CD4-positive, alpha-beta T cell (primary cell): ENCODE measurements at regions of chr12 and their contacts with region 1.

Region 1: GRCh38 chr12:41277116-41277945 is 89.2 kb downstream of the PDZRN4 start:
- DNase-seq: peak in 4 of 14 experiments; percentile 4 to 39 (median 24)
- ATAC-seq: peak; percentile 29
- H3K4me3 ChIP-seq: no peak overlapping the region
- H3K4me3 Mint-ChIP-seq: no peak overlapping the region
- H3K27ac ChIP-seq: no peak overlapping the region
- H3K27ac Mint-ChIP-seq: no peak overlapping the region
- H3K4me1 ChIP-seq: no peaks in the 10 kb centered on the region
- H3K4me1 Mint-ChIP-seq: no peaks in the 10 kb centered on the region
- H3K27me3 ChIP-seq: peaks cover 0 to 6% of the 10 kb centered on the region in 2 experiments
- H3K27me3 Mint-ChIP-seq: no peaks in the 10 kb centered on the region
- CTCF ChIP-seq: peak; percentile 33

Region 2: DNA sequence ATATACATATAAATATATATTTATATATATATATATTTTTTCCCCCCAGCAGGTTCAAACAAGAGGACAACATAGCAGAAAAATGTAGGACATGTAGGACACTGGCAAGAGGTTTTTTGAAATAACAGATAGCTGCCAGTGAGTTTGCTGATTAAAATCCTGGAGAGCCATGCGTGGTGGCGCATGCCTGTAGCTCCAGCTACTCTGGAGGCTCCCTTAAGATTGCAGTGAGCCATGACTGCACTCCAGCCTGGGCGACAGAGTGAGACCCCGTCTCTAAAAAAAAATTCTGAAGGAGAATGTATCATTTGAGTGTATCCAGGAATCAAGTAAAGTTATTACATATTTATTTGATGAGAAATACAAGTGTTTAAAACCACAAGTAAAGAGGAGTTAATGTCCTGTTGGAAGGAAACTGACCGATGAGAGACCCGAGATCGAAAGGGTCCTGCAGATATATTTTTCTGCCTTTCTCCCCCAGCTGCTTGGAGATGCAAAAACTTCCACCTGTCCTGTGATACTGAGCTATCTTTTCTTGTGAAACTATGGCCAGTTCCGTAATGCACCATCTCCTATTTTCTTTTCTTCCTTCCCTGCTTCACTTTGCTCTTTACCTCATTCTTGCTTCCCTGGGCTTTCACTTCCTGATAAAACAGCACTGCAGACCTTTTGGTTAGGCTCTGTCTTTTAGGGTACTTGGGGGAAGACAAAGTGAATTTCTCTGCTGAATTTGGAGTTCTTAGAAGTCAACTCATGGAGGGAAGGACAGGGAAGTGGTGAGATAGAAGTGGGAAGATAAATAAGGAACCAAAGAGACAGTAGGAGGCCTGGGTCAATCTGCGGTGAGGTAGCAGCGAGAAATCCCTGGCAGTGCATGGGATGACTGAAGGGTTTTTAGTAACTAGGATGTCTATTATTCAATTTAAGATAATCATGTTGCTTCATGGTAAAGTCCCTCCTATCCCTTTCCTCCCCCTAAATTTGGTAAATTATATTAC is 1130.2 kb before region 1 on chr12:
- CTCF ChIA-PET with region 1: no interaction called
- POLR2A ChIA-PET with region 1: no interaction called
- intact Hi-C with region 1: no loop called
- DNase-seq: peak in 1 of 14 experiments; percentile 32
- ATAC-seq: peak; percentile 41
- H3K4me3 ChIP-seq: no peak overlapping the region
- H3K4me3 Mint-ChIP-seq: no peak overlapping the region
- H3K27ac ChIP-seq: no peak overlapping the region
- H3K27ac Mint-ChIP-seq: no peak overlapping the region
- H3K4me1 ChIP-seq: no peaks in the 10 kb centered on the region
- H3K4me1 Mint-ChIP-seq: no peaks in the 10 kb centered on the region
- H3K27me3 ChIP-seq: no peaks in the 10 kb centered on the region
- H3K27me3 Mint-ChIP-seq: peaks cover 5% of the 10 kb centered on the region
- CTCF ChIP-seq: no peak

Region 3: DNA sequence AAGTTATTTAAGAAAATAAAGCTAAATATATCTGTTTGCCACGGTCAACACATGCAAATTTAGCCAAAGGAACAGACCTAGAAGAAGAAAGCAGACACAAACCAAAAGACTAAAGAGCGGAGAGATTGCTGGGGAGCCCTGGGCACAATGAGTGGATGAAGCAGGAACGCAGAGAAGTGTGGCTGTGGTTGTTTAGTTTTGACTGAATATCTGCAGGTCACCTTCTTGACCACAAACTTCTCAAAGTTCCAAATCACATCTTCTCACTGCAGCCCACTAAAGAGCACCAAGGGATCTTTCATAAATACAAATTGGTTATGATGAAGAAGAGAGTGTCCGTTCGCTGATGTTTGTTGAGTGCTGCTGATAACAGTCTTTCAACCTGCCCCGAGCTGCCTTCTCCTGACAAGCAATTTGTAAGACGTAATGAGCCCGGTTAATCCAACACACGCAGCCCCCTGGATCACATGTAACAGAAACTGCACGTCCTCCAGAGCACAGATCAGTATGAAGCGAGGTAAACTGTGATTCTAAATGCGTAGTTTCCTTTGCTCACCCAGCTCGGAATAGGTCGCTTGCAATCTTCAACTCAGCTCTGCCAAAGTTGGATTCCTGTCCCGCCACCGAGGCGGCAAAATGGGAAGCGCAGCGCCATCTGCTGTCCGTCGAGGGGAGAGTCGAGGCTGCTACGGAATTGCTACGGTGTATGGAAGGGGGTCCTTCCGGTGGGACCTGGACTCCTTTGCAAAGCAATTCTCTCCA is 746.6 kb after region 1 on chr12:
- CTCF ChIA-PET with region 1: interaction called, 3 read pairs
- POLR2A ChIA-PET with region 1: no interaction called
- intact Hi-C with region 1: loop called (anchors 5 kb)
- DNase-seq: peak; percentile 48 to 78 (median 59)
- ATAC-seq: peak; percentile 83
- H3K4me3 ChIP-seq: peak overlapping the region; percentile 36
- H3K4me3 Mint-ChIP-seq: peak overlapping the region; percentile 73
- H3K27ac ChIP-seq: no peak overlapping the region
- H3K27ac Mint-ChIP-seq: no peak overlapping the region
- H3K4me1 ChIP-seq: peaks cover 8% of the 10 kb centered on the region
- H3K4me1 Mint-ChIP-seq: peaks cover 9% of the 10 kb centered on the region
- H3K27me3 ChIP-seq: peaks cover 3 to 8% of the 10 kb centered on the region in 2 experiments
- H3K27me3 Mint-ChIP-seq: peaks cover 25% of the 10 kb centered on the region
- CTCF ChIP-seq: peak; percentile 90

Region 4: GRCh38 chr12:42104087-42104486 is 826.8 kb after region 1 on chr12:
- CTCF ChIA-PET with region 1: no interaction called
- POLR2A ChIA-PET with region 1: no interaction called
- intact Hi-C with region 1: loop called in 1 of 2 experiments (anchors 5 kb)
- DNase-seq: no peak
- ATAC-seq: peak; percentile 46
- H3K4me3 ChIP-seq: no peak overlapping the region
- H3K4me3 Mint-ChIP-seq: no peak overlapping the region
- H3K27ac ChIP-seq: no peak overlapping the region
- H3K27ac Mint-ChIP-seq: peak overlapping the region; percentile 66
- H3K4me1 ChIP-seq: no peaks in the 10 kb centered on the region
- H3K4me1 Mint-ChIP-seq: peaks cover 21% of the 10 kb centered on the region
- H3K27me3 ChIP-seq: no peaks in the 10 kb centered on the region
- H3K27me3 Mint-ChIP-seq: no peaks in the 10 kb centered on the region
- CTCF ChIP-seq: peak; percentile 47

Region 5: DNA sequence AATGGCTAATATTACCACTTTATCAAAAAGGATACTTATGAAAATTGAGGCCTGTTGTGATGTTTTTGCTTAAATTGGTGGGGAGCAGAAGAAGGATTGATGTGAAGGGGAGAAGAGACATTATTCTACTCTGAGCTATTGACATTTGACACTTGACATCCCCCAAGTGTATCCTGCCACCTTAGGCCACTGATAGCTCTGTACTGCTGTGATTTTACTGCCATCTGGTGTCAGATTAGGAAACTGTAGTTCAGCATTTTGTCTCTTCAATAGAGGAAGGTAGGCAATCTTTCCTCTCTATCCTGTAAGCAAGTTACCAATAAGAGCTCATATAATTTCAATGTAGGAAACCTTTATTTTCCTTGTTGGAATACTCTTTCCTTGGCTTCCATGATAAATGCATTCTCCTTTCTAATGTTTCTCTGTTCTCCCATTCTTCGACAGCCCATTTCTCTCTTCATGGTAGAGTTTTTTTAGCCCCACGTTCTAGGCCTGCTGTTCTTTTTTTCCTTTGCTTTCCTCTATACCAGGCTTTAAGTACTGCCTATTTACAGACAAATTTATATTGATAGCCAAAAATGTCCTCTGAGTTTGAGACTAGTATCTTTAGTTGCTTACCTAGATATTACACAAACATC is 1094.9 kb after region 1 on chr12:
- CTCF ChIA-PET with region 1: no interaction called
- POLR2A ChIA-PET with region 1: no interaction called
- intact Hi-C with region 1: loop called (anchors 1 to 2 kb)
- DNase-seq: peak in 5 of 14 experiments; percentile 3 to 74 (median 63)
- ATAC-seq: peak; percentile 95
- H3K4me3 ChIP-seq: no peak overlapping the region
- H3K4me3 Mint-ChIP-seq: no peak overlapping the region
- H3K27ac ChIP-seq: no peak overlapping the region
- H3K27ac Mint-ChIP-seq: no peak overlapping the region
- H3K4me1 ChIP-seq: no peaks in the 10 kb centered on the region
- H3K4me1 Mint-ChIP-seq: peaks cover 18% of the 10 kb centered on the region
- H3K27me3 ChIP-seq: no peaks in the 10 kb centered on the region
- H3K27me3 Mint-ChIP-seq: no peaks in the 10 kb centered on the region
- CTCF ChIP-seq: peak; percentile 75